ENCODE measurements at regions of chr17 and their contacts with region 1.

Region 1: GRCh38 chr17:72890711-72891110 is 201.8 kb downstream of the SLC39A11 start:
- DNase-seq: no peak
- H3K4me3 ChIP-seq: no peak overlapping the region
- H3K27ac ChIP-seq: no peak overlapping the region
- H3K4me1 ChIP-seq: no peaks in the 10 kb centered on the region
- H3K27me3 ChIP-seq: no peaks in the 10 kb centered on the region
- CTCF ChIP-seq: no peak
- POLR2A ChIP-seq: no peak

Region 2: DNA sequence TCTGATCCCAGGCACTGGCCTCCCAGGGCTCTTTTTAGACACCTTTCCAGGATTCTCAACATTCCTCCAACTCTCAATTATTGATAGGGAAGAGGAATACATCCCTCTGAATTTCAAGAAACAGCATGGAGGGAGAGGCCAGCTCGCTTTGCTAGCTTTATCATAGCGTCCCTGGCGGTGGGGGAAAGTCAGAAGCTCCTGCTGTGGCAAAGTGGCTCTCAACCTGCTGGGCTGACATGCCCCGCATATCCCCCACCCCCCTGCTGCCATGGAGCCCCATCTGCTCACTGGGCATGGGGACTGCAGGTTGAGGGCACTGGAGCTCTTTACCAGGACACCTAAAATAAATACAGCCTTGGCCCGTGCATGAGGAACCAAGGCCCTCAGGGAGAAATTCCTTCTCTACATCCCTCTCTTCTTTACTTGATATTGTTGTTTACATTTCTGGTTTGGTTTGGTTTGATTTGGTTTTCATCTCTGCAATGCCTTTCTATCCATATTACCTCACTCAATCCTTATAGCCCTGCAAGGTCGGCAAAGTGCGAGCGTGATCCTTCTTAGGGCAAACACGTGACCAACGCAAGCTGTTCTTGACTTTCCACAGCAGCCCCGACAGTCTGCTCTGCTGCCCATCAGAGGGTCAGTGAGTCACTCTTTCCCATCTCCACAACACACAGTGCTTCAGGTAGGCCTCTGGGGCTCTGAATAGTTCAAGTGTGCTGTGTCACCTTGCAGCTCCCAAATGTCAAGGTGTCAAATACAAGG is 61.7 kb after region 1 on chr17:
- CTCF ChIA-PET with region 1: no interaction called
- POLR2A ChIA-PET with region 1: interaction called, 10 read pairs
- dilution Hi-C with region 1: no loop called
- intact Hi-C with region 1: no loop called
- DNase-seq: no peak
- H3K4me3 ChIP-seq: no peak overlapping the region
- H3K27ac ChIP-seq: no peak overlapping the region
- H3K4me1 ChIP-seq: no peaks in the 10 kb centered on the region
- H3K27me3 ChIP-seq: no peaks in the 10 kb centered on the region
- CTCF ChIP-seq: no peak
- POLR2A ChIP-seq: no peak